AG04450 (cell line): ENCODE measurements at regions of chr2 and their contacts with region 1.

Region 1: GRCh38 chr2:237774802-237775553 is 23.6 kb upstream of the RBM44 start:
- DNase-seq: no peak
- H3K4me3 ChIP-seq: no peak overlapping the region
- H3K27ac ChIP-seq: no peak overlapping the region
- H3K27me3 ChIP-seq: no peaks in the 10 kb centered on the region
- CTCF ChIP-seq: peak; percentile 72

Region 2: GRCh38 chr2:237581751-237582746 is 192.9 kb before region 1 on chr2:
- CTCF ChIA-PET with region 1: interaction called, 16 read pairs
- POLR2A ChIA-PET with region 1: no interaction called
- DNase-seq: no peak
- H3K4me3 ChIP-seq: peak overlapping the region; percentile 13; the same call in 1 of the 2 replicates
- H3K27ac ChIP-seq: no peak overlapping the region
- H3K27me3 ChIP-seq: peaks cover 7% of the 10 kb centered on the region
- CTCF ChIP-seq: peak; percentile 50

Region 3: GRCh38 chr2:237754626-237755248 is 20.2 kb before region 1 on chr2:
- CTCF ChIA-PET with region 1: no interaction called
- POLR2A ChIA-PET with region 1: no interaction called
- DNase-seq: no peak
- H3K4me3 ChIP-seq: no peak overlapping the region
- H3K27ac ChIP-seq: no peak overlapping the region
- H3K27me3 ChIP-seq: no peaks in the 10 kb centered on the region
- CTCF ChIP-seq: no peak

Region 4: DNA sequence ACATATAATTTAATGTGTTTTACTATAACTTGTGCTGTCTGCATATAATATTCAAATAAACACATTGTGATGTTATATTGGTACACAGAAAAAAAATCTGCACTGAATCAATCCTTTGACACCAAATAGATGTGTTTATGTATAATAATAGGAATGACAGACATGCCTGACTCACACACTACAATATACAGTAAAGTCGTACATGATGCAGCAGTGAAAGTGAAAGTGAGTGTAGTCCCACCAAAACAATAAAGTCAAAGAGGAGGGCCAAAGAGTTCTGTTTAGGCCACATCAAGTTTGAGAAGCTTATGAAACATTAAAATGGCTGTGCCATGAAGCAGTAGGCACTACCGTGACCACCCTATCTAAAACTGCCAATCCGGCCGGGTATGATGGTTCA is 15.4 kb after region 1 on chr2:
- CTCF ChIA-PET with region 1: interaction called, 11 read pairs
- POLR2A ChIA-PET with region 1: no interaction called
- DNase-seq: peak; percentile 20
- H3K4me3 ChIP-seq: no peak overlapping the region
- H3K27ac ChIP-seq: no peak overlapping the region
- H3K27me3 ChIP-seq: no peaks in the 10 kb centered on the region
- CTCF ChIP-seq: no peak